ENCODE measurements at regions of chr7 and their contacts with region 1.

Region 1: GRCh38 chr7:140165422-140165821 is 11.4 kb downstream of the KDM7A start:
- DNase-seq: no peak
- CTCF ChIP-seq: no peak

Region 2: GRCh38 chr7:139909379-139910050 is 255.9 kb before region 1 on chr7:
- in situ Hi-C with region 1: no loop called
- DNase-seq: no peak
- CTCF ChIP-seq: no peak

Region 3: DNA sequence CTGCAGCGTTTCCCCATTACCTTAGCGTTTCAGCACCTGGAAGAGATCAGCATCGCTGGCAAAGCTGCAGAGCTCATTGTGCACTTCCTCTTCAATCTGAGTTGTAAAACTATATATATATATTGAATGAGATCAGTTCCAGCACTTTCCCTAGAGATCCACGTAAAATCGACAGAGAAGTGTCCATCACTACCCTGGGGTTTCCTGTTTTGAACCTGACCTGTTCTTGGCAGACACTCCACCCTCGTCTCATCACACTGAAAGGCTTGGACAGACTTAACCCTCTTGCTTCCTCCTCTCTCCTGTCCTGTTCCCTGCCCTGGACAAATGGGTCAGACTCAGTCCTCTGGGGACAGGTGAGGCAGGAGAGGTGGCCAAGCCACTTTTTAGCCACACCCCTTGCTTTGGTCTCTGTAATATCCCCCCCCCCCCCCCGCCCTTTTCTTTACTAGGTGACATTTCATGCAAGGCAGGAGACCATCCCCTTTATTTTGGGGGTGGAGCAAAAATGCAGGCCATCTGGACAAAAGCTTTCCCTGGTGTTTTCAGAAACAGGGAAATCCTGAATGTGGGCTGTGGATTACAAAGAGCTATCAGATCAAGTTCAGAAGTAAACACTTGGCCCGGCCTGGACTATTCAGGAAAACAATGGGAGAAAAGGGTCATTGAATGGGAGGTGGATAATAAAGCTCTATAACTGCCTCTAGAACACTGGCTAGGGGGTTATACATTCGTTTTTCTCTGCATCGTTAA is 95.1 kb after region 1 on chr7:
- in situ Hi-C with region 1: no loop called
- DNase-seq: no peak
- CTCF ChIP-seq: no peak

Region 4: DNA sequence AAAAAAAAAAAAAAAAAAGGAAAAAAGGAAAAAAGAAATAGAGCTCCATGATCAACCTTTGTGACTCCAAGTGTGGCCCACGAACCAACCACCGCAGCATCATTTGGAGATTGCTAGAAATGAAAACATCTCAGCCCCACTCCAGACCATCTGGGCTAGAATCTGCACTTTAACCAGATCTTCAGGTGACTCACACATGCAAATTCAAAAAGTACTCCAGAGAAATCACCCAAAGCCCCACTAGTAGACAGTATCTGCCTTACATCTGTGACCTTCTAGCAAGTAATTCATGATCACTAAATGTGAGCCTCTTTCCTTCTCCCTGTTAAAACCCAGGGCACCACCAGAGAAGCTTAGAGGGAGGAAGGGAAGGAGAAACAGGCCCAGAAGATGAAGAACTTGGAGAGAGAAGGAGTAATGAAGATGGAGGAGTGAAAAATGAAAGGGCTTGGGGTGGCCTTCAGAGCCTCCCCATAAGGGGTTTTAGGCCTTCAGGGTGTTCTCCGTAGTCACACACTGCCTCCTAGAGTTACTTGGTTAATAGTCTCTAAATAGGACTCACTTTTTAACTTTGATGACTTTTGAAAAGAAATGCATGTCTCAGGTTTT is 138.9 kb after region 1 on chr7:
- in situ Hi-C with region 1: loop called (anchors 10 kb)
- DNase-seq: peak; percentile 61
- CTCF ChIP-seq: peak; percentile 49

Measured in GM13977 (cell line).